AG04449 (cell line): ENCODE measurements at regions of chr6 and their contacts with region 1.

Region 1: GRCh38 chr6:116511404-116512110 is at the start of gene CALHM5:
- DNase-seq: peak; percentile 46
- H3K4me3 ChIP-seq: peak within 1 kb of the TSS; percentile 59
- CTCF ChIP-seq: peak; percentile 53

Region 2: DNA sequence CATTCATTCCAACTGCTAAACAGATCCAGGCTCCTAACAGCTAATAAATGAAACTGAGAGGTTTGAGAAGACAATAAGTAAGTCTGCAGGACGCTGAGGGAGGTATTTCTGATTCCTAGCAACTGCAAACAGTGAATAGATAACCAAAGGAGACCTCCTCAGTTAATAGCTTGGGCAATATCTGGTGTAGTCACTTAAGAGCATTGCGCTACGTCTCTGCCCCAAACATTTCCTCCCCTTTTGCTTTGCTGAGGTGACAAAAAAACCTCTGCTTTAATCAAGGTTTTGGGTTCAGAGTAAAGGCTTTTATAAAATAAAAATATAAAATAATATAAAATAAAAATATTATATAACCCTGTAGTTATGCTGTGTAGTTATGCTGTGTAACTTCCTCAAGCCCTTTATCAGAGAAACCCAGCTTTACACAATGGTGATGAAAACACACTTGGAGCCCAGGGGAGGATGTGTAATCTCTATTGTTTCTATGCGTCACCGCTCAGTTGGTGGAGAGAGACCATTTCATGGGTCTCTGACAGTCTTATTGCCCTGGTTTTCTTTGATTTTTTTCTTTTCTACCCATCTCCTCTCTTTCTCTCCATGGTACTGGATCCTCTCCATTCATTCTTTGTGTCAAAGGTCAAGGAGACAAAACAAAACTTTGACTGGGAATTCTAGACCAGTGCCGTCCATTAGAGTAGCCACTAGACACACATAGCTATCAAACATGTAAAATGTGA is 19.1 kb before region 1 on chr6:
- CTCF ChIA-PET with region 1: interaction called, 17 read pairs
- POLR2A ChIA-PET with region 1: no interaction called
- DNase-seq: no peak
- H3K4me3 ChIP-seq: no peak overlapping the region
- CTCF ChIP-seq: no peak

Region 3: GRCh38 chr6:116500969-116501433 is 10.6 kb before region 1 on chr6:
- CTCF ChIA-PET with region 1: interaction called, 22 read pairs
- POLR2A ChIA-PET with region 1: no interaction called
- DNase-seq: no peak
- H3K4me3 ChIP-seq: no peak overlapping the region
- CTCF ChIP-seq: no peak